Caco-2 (cell line): ENCODE measurements at regions of chr15 and their contacts with region 1.

Region 1: GRCh38 chr15:55993111-55993803 is at the start of gene NEDD4:
- DNase-seq: peak; percentile 88
- H3K4me3 ChIP-seq: peak within 1 kb of the TSS; percentile 68
- H3K4me3 Mint-ChIP-seq: peak within 1 kb of the TSS; percentile 89
- H3K27ac Mint-ChIP-seq: peak within 1 kb of the TSS; percentile 77
- H3K4me1 ChIP-seq: peaks cover 14% of the 10 kb centered on the region
- H3K4me1 Mint-ChIP-seq: peaks cover 31% of the 10 kb centered on the region
- H3K27me3 ChIP-seq: no peaks in the 10 kb centered on the region
- H3K27me3 Mint-ChIP-seq: no peaks in the 10 kb centered on the region
- CTCF ChIP-seq: peak; percentile 46 to 58
- total RNA-seq, gene NEDD4: 27.0 and 33.9 TPM in 2 replicates

Region 2: DNA sequence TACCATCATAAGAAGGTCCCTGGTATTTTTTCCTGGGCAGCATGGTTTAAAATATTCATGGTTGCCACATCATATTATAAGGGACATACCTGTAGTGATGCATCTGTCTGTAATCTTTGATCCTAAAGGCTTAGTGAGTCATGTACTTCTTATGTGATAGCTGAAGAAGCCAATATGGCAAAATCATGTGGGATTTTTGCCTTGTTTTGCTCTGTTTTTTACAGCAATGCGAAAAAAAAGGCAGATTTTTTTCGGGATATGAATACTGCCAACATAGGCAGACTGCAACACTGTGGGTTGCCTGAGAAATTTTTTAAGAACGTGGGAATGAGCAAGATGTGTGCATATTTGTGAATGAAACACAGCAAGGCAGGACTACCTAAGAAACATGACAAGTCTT is 393.8 kb before region 1 on chr15:
- CTCF ChIA-PET with region 1: no interaction called
- POLR2A ChIA-PET with region 1: no interaction called
- intact Hi-C with region 1: no loop called
- DNase-seq: no peak
- H3K4me3 ChIP-seq: no peak overlapping the region
- H3K4me3 Mint-ChIP-seq: no peak overlapping the region
- H3K27ac Mint-ChIP-seq: no peak overlapping the region
- H3K4me1 ChIP-seq: no peaks in the 10 kb centered on the region
- H3K4me1 Mint-ChIP-seq: no peaks in the 10 kb centered on the region
- H3K27me3 ChIP-seq: no peaks in the 10 kb centered on the region
- H3K27me3 Mint-ChIP-seq: peaks cover 6% of the 10 kb centered on the region
- CTCF ChIP-seq: no peak

Region 3: DNA sequence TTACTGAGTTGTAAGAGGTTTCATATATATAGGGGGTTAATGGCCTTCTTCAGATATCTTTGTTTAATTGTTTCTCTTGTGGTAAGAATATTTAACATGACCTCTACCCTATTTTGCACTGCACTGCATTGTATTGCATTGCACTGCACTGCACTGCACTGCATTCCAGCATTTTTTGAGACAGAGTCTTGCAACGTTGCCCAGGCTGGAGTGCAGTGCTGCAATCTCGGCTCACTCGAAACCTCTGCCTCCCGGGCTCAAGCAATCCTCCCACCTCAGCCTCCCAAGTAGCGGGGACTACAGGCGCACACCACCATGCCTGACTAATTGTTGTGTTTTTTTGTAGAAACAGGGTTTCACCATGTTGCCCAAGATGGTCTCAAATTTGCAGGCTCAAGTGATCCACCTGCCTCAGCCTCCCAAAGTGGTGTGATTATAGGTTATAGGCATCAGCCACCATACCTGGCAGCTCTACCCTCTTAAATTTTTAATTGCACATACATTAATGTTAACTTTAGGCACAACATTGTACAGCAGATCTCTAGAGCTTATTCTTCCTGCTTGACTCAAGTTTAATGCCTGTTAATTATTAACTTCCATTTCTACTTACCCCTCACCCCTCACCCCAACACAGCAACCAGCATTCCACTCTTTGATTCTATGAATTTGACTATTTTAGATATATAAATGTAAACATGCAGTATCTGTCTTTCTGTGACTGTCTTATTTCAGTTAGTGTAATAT is 38.2 kb before region 1 on chr15:
- CTCF ChIA-PET with region 1: no interaction called
- POLR2A ChIA-PET with region 1: no interaction called
- intact Hi-C with region 1: loop called (anchors 5 kb)
- DNase-seq: no peak
- H3K4me3 ChIP-seq: no peak overlapping the region
- H3K4me3 Mint-ChIP-seq: no peak overlapping the region
- H3K27ac Mint-ChIP-seq: no peak overlapping the region
- H3K4me1 ChIP-seq: peaks cover 38% of the 10 kb centered on the region
- H3K4me1 Mint-ChIP-seq: peaks cover 28% of the 10 kb centered on the region
- H3K27me3 ChIP-seq: no peaks in the 10 kb centered on the region
- H3K27me3 Mint-ChIP-seq: no peaks in the 10 kb centered on the region
- CTCF ChIP-seq: no peak

Region 4: DNA sequence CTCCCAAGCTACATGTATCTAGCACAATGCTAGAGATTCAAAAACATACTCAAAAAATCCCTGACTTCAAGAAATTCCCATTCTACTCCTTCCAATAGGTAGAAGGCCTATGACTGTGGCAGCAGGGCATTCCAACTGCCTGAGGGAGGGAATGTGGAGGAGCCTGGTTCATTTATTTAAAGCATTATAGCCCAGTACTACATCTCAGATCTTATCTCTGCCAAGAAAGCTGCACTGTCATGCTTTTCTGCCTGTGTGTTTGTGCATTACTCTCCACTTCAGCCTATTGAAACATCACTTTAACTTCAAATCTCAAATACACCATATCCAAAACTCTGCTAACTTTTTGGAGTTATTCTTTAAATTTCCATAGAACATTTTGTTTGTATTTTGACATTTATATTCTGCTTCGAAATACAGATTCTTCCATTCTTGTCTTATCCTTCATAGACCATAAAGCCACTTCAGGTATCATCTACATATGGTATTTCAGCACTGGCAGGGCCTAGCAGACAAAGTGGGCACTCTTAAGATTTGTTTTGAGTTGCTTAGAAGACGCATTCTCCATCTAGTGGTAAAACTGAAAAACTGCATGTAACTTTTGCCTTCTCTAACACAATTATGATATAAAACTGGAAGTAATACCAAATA is 59.3 kb after region 1 on chr15:
- CTCF ChIA-PET with region 1: interaction called, 6 read pairs
- POLR2A ChIA-PET with region 1: no interaction called
- intact Hi-C with region 1: loop called (anchors 1 kb)
- DNase-seq: peak in 1 of 2 experiments; percentile 37
- H3K4me3 ChIP-seq: no peak overlapping the region
- H3K4me3 Mint-ChIP-seq: no peak overlapping the region
- H3K27ac Mint-ChIP-seq: peak overlapping the region; percentile 75
- H3K4me1 ChIP-seq: peaks cover 16% of the 10 kb centered on the region
- H3K4me1 Mint-ChIP-seq: peaks cover 10% of the 10 kb centered on the region
- H3K27me3 ChIP-seq: no peaks in the 10 kb centered on the region
- H3K27me3 Mint-ChIP-seq: no peaks in the 10 kb centered on the region
- CTCF ChIP-seq: peak; percentile 56 to 72

Region 5: GRCh38 chr15:56245871-56246814 is 252.9 kb after region 1 on chr15:
- CTCF ChIA-PET with region 1: no interaction called
- POLR2A ChIA-PET with region 1: no interaction called
- intact Hi-C with region 1: loop called (anchors 5 kb)
- DNase-seq: peak; percentile 86 to 92
- H3K4me3 ChIP-seq: peak overlapping the region; percentile 15; the same call in 1 of the 2 replicates
- H3K4me3 Mint-ChIP-seq: peak overlapping the region; percentile 82
- H3K27ac Mint-ChIP-seq: peak overlapping the region; percentile 19
- H3K4me1 ChIP-seq: peaks cover 31% of the 10 kb centered on the region
- H3K4me1 Mint-ChIP-seq: peaks cover 18% of the 10 kb centered on the region
- H3K27me3 ChIP-seq: no peaks in the 10 kb centered on the region
- H3K27me3 Mint-ChIP-seq: no peaks in the 10 kb centered on the region
- CTCF ChIP-seq: peak; percentile 100